Activated naive CD4-positive, alpha-beta T cell treated with anti-CD3 and anti-CD28 coated beads for 36 hours (primary cell): ENCODE measurements at regions of chr1 and their contacts with region 1.

Region 1: GRCh38 chr1:220241072-220241663 is 31.1 kb downstream of the RAB3GAP2 start:
- DNase-seq: no peak
- H3K4me3 Mint-ChIP-seq: no peak overlapping the region
- H3K27ac Mint-ChIP-seq: no peak overlapping the region
- H3K4me1 Mint-ChIP-seq: peaks cover 45% of the 10 kb centered on the region
- H3K27me3 Mint-ChIP-seq: no peaks in the 10 kb centered on the region

Region 2: GRCh38 chr1:220224033-220224432 is 17.1 kb before region 1 on chr1:
- CTCF ChIA-PET with region 1: interaction called, 5 read pairs
- intact Hi-C with region 1: loop called (anchors 2 kb)
- DNase-seq: no peak
- H3K4me3 Mint-ChIP-seq: no peak overlapping the region
- H3K27ac Mint-ChIP-seq: no peak overlapping the region
- H3K4me1 Mint-ChIP-seq: peaks cover 60% of the 10 kb centered on the region
- H3K27me3 Mint-ChIP-seq: no peaks in the 10 kb centered on the region

Region 3: DNA sequence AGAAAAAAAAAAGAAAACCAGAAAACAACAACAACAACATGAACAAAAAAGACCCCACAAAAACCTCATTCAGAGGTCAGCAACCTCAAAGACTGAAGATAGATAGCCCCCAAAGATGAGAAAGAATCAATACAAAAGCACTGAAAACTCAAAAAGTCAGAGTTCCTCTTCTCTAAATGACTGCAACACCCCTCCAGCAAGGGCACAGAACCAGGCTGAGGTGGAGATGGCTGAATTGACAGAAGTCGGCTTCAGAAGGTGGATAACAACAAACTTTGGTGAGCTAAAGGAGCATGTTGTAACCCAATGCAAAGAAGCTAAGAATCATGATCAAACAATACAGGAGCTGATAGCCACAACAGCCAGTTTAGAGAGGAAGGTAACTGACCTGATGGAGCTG is 14.0 kb after region 1 on chr1:
- CTCF ChIA-PET with region 1: no interaction called
- intact Hi-C with region 1: loop called (anchors 2 kb)
- DNase-seq: no peak
- H3K4me3 Mint-ChIP-seq: no peak overlapping the region
- H3K27ac Mint-ChIP-seq: no peak overlapping the region
- H3K4me1 Mint-ChIP-seq: peaks cover 33% of the 10 kb centered on the region
- H3K27me3 Mint-ChIP-seq: no peaks in the 10 kb centered on the region

Region 4: DNA sequence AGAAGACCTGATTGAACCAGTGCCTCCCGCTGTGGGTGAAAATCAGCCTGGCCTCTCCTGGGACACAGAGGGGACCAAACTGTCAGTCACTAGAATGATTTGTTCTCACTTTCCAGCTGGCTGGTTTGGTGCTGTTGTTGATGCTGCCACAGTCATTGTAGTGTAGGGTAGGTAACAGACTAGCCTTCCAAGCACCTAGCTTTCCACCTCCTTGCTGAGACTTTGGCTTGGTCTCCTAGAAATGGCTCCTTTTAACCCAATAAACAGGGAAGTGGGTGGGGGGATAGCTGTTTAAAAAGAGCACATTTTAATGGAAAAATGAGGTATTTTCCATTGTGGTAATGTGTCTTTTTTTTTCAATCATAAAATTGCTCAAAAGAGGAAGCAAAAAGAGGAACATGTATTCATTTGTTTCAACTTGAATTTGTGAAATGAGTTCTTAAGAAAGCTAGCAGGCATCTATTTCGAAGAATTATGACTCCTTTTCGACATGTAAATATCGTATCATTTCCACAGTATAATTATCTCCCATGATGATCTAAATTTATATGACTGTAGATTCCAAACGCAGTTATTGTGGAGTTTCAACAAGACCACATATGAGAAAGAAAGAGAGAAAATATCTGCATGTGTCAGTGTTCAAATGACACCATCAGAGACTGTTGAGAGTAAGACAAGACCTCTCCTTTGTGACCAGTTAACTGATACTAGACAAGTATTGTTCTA is 828.2 kb after region 1 on chr1:
- CTCF ChIA-PET with region 1: no interaction called
- intact Hi-C with region 1: no loop called
- DNase-seq: no peak
- H3K4me3 Mint-ChIP-seq: no peak overlapping the region
- H3K27ac Mint-ChIP-seq: no peak overlapping the region
- H3K4me1 Mint-ChIP-seq: no peaks in the 10 kb centered on the region
- H3K27me3 Mint-ChIP-seq: peaks cover 16% of the 10 kb centered on the region